ENCODE measurements at regions of chr19 and their contacts with region 1.

Region 1: DNA sequence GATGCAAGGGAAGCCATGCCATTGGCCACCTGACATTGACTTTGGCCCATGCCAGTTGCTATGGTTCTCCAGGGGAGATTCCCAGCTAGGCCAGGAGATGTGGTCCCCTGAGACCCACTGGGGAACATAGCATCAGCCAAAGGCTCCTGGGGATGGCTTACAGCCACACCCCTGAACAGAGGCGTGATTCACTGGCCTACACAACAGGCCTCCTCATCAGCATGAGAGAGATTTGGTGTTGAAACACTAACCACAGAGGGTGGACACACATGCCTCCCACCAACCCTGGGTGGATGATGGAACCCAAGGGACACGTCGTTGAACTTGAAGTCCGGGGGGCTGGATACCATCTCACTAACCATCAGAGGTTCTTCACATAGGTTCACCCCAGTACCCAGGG is 14.4 kb downstream of the IQCN start:
- DNase-seq: no peak
- H3K4me3 ChIP-seq: no peak overlapping the region
- H3K27ac ChIP-seq: no peak overlapping the region
- H3K4me1 ChIP-seq: peaks cover 4% of the 10 kb centered on the region
- H3K27me3 ChIP-seq: no peaks in the 10 kb centered on the region
- CTCF ChIP-seq: no peak

Region 2: DNA sequence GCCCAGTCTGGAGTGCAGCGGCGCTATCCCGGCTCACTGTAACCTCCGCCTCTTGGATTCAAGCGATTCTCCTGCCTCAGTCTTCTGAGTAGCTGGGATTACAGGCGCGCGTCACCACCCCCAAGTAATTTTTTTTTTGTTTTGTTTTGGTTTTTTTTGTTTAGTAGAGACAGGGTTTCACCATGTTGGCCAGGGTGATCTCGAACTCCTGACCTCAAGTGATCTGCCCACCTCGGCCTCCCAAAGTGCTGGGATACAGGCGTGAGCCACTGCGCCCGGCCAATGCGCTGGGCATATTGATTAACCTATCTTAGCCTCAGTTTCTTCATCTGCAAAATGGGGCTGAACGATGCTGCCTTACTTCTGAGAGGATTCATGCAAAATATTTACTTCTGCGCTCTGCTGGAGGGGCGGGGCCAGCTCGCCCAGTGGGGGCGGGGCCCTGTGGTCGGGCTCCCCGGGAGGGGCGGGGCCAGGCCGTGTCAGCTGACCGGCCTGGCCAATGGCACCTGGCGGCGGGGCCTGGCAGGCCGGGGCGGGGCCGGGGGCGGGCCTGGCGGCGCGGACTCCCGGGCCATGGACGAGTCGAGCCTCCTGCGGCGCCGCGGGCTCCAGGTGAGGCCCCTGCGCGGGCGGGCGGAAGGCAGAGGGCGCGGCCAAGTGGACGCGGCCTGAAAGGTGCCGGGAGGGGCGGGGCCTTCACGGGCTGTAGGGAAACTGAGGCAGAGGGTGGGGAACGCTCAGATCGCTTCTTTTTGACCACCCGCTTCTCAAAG is 162.5 kb before region 1 on chr19 and contains the start of gene MAST3:
- CTCF ChIA-PET with region 1: no interaction called
- dilution Hi-C with region 1: loop called (anchors 5 kb)
- in situ Hi-C with region 1: no loop called
- intact Hi-C with region 1: no loop called
- DNase-seq: peak; percentile 74
- H3K4me3 ChIP-seq: peak within 1 kb of the TSS; percentile 47 to 59 (median 48)
- H3K27ac ChIP-seq: no peak within 1 kb of the TSS
- H3K4me1 ChIP-seq: peaks cover 24% of the 10 kb centered on the region
- H3K27me3 ChIP-seq: no peaks in the 10 kb centered on the region
- CTCF ChIP-seq: no peak
- total RNA-seq, gene MAST3: 3.8 to 7.0 TPM

Region 3: GRCh38 chr19:18214779-18215433 is 45.0 kb before region 1 on chr19:
- CTCF ChIA-PET with region 1: no interaction called
- dilution Hi-C with region 1: loop called (anchors 5 kb)
- in situ Hi-C with region 1: no loop called
- intact Hi-C with region 1: no loop called
- DNase-seq: peak; percentile 53
- H3K4me3 ChIP-seq: no peak overlapping the region
- H3K27ac ChIP-seq: no peak overlapping the region
- H3K4me1 ChIP-seq: peaks cover 4% of the 10 kb centered on the region
- H3K27me3 ChIP-seq: no peaks in the 10 kb centered on the region
- CTCF ChIP-seq: no peak

Region 4: GRCh38 chr19:18249834-18250233 is 10.1 kb before region 1 on chr19:
- CTCF ChIA-PET with region 1: no interaction called
- dilution Hi-C with region 1: no loop called
- in situ Hi-C with region 1: no loop called
- intact Hi-C with region 1: no loop called
- DNase-seq: no peak
- H3K4me3 ChIP-seq: no peak overlapping the region
- H3K27ac ChIP-seq: no peak overlapping the region
- H3K4me1 ChIP-seq: peaks cover under 1% of the 10 kb centered on the region
- H3K27me3 ChIP-seq: no peaks in the 10 kb centered on the region
- CTCF ChIP-seq: no peak

Region 5: GRCh38 chr19:18333662-18334389 is 73.9 kb after region 1 on chr19:
- CTCF ChIA-PET with region 1: no interaction called
- dilution Hi-C with region 1: loop called (anchors 5 kb)
- in situ Hi-C with region 1: no loop called
- intact Hi-C with region 1: no loop called
- DNase-seq: no peak
- H3K4me3 ChIP-seq: no peak overlapping the region
- H3K27ac ChIP-seq: no peak overlapping the region
- H3K4me1 ChIP-seq: peaks cover 5% of the 10 kb centered on the region
- H3K27me3 ChIP-seq: no peaks in the 10 kb centered on the region
- CTCF ChIP-seq: no peak

Region 6: DNA sequence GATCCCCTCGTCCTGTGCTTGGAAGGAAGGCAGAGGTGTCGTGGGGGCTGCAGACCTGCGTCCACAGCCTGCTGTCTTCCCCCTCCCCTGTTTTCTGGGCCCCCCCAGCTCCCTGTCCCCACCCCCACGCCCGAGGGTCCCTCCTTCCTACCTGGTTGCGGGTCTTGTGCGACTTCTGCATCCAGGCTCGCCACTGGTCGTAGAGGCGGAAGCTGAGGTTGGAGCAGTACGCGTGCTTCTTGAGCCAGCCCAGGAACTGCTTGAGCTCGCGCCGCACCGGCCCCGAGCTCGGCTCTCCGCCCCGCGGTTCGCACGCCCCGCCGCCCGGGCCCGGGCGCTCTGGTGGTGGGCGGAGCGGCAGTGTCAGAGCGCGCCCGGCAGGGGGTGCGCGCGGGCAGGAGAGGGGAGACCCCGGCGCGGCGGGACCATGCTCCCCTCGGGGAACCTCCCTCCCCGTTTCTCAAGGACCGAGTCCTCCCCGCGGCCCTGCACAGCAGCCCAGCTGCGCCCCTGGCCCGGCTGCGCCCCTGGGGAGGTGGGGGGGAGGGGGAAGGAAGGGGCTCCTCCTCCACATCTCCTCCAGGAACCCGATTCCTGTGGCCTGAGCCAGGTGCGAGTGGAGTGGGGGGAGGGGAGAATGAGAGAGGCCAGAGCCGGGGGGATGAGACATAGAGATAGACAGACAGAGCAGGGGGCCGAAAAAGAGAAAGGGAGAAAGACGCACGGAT is 334.4 kb after region 1 on chr19:
- CTCF ChIA-PET with region 1: no interaction called
- dilution Hi-C with region 1: no loop called
- in situ Hi-C with region 1: no loop called
- intact Hi-C with region 1: no loop called
- DNase-seq: peak; percentile 62
- H3K4me3 ChIP-seq: peak overlapping the region; percentile 21 to 49 (median 34)
- H3K27ac ChIP-seq: no peak overlapping the region
- H3K4me1 ChIP-seq: peaks cover 21% of the 10 kb centered on the region
- H3K27me3 ChIP-seq: no peaks in the 10 kb centered on the region
- CTCF ChIP-seq: peak; percentile 63 to 64